CD8-positive, alpha-beta memory T cell (primary cell): ENCODE measurements at regions of chr19 and their contacts with region 1.

Region 1: GRCh38 chr19:12782229-12783028 is 7.1 kb upstream of the HOOK2 start:
- DNase-seq: peak; percentile 92 to 99 (median 97)
- H3K4me3 ChIP-seq: peak overlapping the region; percentile 64
- H3K4me3 Mint-ChIP-seq: peak overlapping the region; percentile 77 to 93 (median 85)
- H3K27ac ChIP-seq: peak overlapping the region; percentile 84
- H3K27ac Mint-ChIP-seq: peak overlapping the region in 7 of 8 donors; percentile 96 to 100 (median 98)
- H3K4me1 ChIP-seq: peaks cover 67% of the 10 kb centered on the region
- H3K4me1 Mint-ChIP-seq: peaks cover 29 to 40% (median 29%) of the 10 kb centered on the region in 3 donors
- H3K27me3 ChIP-seq: no peaks in the 10 kb centered on the region
- H3K27me3 Mint-ChIP-seq: peaks cover 0 to 2% of the 10 kb centered on the region in 2 donors

Region 2: GRCh38 chr19:12722566-12723380 is 59.7 kb before region 1 on chr19:
- CTCF ChIA-PET with region 1: no interaction called
- POLR2A ChIA-PET with region 1: no interaction called
- DNase-seq: peak; percentile 90 to 97 (median 92)
- H3K4me3 ChIP-seq: peak overlapping the region; percentile 98
- H3K4me3 Mint-ChIP-seq: peak overlapping the region; percentile 90 to 95 (median 94)
- H3K27ac ChIP-seq: peak overlapping the region; percentile 60
- H3K27ac Mint-ChIP-seq: peak overlapping the region; percentile 85 to 96 (median 94)
- H3K4me1 ChIP-seq: peaks cover 17% of the 10 kb centered on the region
- H3K4me1 Mint-ChIP-seq: peaks cover 35 to 46% (median 38%) of the 10 kb centered on the region in 3 donors
- H3K27me3 ChIP-seq: no peaks in the 10 kb centered on the region
- H3K27me3 Mint-ChIP-seq: peaks cover 0 to 4% of the 10 kb centered on the region in 2 donors

Region 3: DNA sequence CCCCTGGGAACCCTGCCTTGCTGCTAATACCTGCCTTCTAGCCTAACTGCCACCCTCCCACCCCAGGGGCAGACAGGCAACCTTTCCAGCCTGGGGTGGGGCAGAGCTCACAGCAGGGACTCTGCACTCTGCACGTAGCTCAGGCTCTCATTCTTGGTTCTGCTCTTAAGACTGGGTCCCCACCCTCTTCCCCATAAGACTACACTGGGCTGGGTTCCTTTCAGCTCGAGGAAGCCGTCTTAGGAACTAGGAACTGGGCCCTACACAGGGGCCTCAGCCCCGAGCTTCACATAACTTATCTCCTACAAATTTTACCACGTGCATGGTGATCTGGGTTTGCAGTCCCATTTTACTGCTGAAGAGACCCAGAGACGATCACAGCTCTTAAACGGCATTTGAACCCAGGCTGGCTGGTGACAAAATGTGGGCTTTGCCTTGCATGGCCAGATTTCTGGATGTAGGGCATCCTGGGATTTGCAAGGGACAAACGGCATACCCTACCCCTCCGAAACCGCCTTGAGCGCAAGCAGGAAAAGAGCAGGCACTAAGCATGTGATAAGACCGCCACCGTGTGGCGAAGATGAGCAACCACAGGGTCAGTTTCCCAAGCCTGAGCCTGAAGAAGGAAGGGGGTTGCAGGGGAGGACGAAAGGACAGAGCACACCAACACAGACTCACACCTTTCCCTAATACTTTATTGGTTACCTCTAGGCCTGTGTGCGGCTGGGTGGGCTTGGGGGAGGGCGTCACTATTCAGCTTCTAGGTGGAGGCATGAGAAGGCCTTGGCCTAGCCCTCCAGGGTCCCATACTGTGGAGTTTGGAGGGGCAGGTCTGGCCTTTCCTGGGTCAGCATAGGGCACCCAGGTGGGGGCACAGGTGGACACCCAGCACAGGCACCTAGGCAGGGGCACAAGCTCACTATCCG is 14.0 kb after region 1 on chr19:
- CTCF ChIA-PET with region 1: interaction called, 483 read pairs
- POLR2A ChIA-PET with region 1: interaction called, 167 read pairs
- DNase-seq: peak; percentile 57 to 82 (median 74)
- H3K4me3 ChIP-seq: peak overlapping the region; percentile 56
- H3K4me3 Mint-ChIP-seq: peak overlapping the region; percentile 77 to 85 (median 83)
- H3K27ac ChIP-seq: peak overlapping the region; percentile 39
- H3K27ac Mint-ChIP-seq: peak overlapping the region; percentile 82 to 96 (median 93)
- H3K4me1 ChIP-seq: peaks cover 39% of the 10 kb centered on the region
- H3K4me1 Mint-ChIP-seq: peaks cover 28 to 42% (median 38%) of the 10 kb centered on the region in 3 donors
- H3K27me3 ChIP-seq: no peaks in the 10 kb centered on the region
- H3K27me3 Mint-ChIP-seq: peaks cover 0 to 25% of the 10 kb centered on the region in 2 donors